Activated CD4-positive, alpha-beta T cell treated with anti-CD3 and anti-CD28 coated beads, Interleukin-2, amount 10 ng/mL, durations not matched to agents 24 days and 14 days (primary cell): ENCODE measurements at regions of chr1 and their contacts with region 1.

Region 1: DNA sequence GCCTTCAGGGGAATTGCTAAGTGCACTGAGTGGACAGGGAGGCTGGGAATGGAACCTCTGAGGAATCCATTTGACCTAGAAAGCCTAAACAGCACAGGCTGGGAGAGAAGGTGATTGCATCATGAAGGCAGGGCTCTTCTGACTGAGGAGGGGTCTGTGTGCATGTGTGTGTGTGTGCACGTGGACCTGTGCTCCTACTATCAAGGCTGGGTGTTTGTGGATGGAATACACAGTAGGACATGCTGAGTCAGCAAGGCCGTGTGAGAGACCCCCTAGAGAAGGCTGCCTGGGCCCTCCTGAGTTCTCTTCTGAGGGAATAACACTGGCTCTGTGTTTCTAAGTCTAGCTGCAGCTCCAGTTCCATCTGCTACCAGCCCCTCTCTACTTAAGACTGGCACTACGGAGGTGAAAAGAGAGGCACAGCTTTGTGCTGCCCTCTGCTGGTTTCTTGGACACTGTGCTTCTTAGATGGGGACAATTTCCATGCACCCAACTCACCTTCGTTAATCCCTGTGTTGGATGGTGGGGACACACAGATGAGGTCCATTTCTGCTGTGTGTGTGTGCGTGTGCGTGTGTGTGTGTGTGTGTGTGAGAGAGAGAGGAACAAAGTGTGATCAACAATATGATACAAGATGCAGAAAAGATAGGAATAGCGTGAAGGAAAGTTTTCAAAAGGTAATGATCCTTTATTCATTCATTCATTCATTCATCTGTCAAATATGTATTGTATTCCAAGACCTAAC is 6.2 kb upstream of the EFCAB14 start:
- DNase-seq: peak; percentile 91
- H3K4me3 Mint-ChIP-seq: no peak overlapping the region
- H3K27ac Mint-ChIP-seq: no peak overlapping the region
- H3K4me1 Mint-ChIP-seq: no peaks in the 10 kb centered on the region
- H3K27me3 Mint-ChIP-seq: peaks cover 25% of the 10 kb centered on the region

Region 2: DNA sequence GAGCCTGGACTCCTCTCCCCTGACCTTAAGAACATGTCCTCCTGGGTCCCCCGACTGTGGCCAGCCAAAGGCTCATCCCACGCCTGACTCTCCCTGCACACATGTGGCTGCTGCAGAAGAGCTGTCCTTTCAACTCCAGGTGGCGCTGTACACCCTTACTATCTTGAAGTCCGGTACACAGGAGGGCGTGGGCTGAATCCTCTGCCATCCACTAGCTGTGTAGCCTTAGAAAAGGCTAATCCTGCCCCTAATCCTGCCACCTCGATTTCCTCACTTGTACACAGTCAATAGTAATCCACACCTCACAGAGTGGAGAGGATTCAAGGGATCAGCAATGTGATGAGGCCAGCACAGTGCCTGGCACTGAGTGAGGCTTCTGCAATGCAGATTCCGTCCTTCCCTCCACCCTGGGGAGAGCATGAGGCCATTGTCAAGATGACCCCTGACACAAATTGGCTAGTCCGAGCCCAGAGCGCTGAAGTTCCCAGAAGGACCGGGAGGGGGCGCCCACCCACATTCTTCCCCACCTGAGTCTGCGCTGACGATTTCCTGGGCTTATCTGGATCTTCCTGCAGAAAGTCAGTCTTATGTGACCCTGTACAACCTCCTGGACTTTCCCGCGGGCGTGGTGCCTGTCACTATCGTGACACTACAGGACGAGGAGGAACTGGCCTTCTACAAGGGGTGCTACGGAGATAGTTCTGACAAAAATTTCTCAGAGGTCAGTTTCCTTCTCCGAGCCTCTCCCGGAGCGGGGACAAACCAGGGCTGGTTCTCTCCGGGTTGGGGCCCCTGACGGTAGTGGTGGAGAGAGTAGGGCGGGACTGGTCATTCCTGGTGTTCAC is 282.6 kb before region 1 on chr1:
- intact Hi-C with region 1: loop called (anchors 1 kb)
- DNase-seq: peak; percentile 92
- H3K4me3 Mint-ChIP-seq: peak overlapping the region; percentile 85
- H3K27ac Mint-ChIP-seq: peak overlapping the region; percentile 1
- H3K4me1 Mint-ChIP-seq: peaks cover 13% of the 10 kb centered on the region
- H3K27me3 Mint-ChIP-seq: peaks cover 36% of the 10 kb centered on the region

Region 3: DNA sequence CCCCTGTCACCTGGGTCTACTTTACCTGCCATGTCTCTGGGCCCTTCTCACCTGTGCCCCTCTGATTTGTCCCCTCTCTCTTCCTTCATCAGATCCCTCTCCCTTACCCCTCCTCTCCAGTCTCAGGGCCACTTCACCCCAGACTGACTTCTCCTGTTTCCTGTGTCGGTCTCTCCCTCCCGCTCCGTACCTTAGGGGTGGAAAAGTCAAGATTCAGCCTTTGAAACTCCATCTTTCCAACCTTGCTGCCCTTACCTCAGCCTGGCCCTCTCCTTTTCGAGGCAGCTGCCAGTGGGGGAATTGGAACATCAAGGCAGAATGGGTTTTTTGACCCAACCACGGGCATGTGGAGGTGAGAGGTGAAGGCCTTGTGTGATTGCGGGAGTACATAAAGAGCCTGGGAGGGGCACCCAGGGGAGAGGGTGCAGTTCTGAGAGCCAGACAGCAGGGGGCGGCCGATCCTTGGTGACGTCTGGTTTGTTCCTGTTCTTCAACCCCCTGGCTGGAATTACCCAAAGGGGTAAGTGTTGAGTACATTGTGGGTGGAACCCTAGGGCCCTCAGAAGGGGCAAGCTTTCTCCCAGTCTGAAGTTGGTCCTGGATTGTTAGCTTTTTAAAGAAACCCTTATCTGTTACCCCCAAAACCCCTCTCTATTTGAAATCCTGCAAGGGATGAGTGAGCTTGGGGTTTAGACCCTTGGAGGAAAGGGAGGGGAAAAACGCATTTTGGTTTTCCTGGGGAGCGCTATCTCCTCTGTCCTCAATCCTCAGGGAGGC is 247.8 kb before region 1 on chr1:
- intact Hi-C with region 1: loop called (anchors 10 kb)
- DNase-seq: peak; percentile 93
- H3K4me3 Mint-ChIP-seq: no peak overlapping the region
- H3K27ac Mint-ChIP-seq: no peak overlapping the region
- H3K4me1 Mint-ChIP-seq: no peaks in the 10 kb centered on the region
- H3K27me3 Mint-ChIP-seq: peaks cover 48% of the 10 kb centered on the region

Region 4: GRCh38 chr1:46622344-46622743 is 102.8 kb before region 1 on chr1:
- intact Hi-C with region 1: loop called (anchors 1 kb)
- DNase-seq: no peak
- H3K4me3 Mint-ChIP-seq: no peak overlapping the region
- H3K27ac Mint-ChIP-seq: no peak overlapping the region
- H3K4me1 Mint-ChIP-seq: peaks cover 22% of the 10 kb centered on the region
- H3K27me3 Mint-ChIP-seq: no peaks in the 10 kb centered on the region

Region 5: GRCh38 chr1:46699666-46700065 is 25.5 kb before region 1 on chr1:
- intact Hi-C with region 1: no loop called
- DNase-seq: no peak
- H3K4me3 Mint-ChIP-seq: no peak overlapping the region
- H3K27ac Mint-ChIP-seq: no peak overlapping the region
- H3K4me1 Mint-ChIP-seq: peaks cover 16% of the 10 kb centered on the region
- H3K27me3 Mint-ChIP-seq: no peaks in the 10 kb centered on the region

Region 6: DNA sequence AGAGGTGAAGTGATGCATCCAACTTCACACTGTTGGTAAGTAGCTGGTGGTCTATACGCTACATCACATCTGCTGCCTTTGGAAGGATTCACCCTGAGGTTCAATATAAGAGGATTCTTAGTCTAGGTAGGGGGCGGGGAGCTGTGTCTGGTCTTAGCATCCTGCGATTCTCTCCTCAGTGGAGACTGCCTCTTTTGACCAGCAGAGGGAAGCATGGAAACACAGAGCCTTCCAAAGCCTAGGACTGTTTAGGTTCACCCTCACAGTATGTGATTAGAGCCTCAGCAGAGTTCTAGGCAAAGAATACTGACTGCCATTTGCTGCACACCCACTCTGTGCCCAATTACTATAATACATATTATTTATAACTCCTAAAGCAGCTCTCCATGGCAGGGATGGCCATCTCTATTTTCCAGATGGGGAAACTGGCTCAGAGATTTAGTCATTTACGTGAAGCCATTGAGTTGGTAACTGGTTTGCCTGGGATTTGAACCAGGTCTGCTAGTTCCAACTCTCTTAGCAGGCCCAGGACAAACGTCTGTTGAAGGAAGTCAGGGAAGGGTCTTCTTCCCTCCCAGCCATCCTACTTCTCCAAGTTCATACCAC is 22.6 kb after region 1 on chr1:
- intact Hi-C with region 1: no loop called
- DNase-seq: no peak
- H3K4me3 Mint-ChIP-seq: no peak overlapping the region
- H3K27ac Mint-ChIP-seq: no peak overlapping the region
- H3K4me1 Mint-ChIP-seq: no peaks in the 10 kb centered on the region
- H3K27me3 Mint-ChIP-seq: peaks cover 40% of the 10 kb centered on the region